ENCODE measurements at regions of chr20 and their contacts with region 1.

Region 1: DNA sequence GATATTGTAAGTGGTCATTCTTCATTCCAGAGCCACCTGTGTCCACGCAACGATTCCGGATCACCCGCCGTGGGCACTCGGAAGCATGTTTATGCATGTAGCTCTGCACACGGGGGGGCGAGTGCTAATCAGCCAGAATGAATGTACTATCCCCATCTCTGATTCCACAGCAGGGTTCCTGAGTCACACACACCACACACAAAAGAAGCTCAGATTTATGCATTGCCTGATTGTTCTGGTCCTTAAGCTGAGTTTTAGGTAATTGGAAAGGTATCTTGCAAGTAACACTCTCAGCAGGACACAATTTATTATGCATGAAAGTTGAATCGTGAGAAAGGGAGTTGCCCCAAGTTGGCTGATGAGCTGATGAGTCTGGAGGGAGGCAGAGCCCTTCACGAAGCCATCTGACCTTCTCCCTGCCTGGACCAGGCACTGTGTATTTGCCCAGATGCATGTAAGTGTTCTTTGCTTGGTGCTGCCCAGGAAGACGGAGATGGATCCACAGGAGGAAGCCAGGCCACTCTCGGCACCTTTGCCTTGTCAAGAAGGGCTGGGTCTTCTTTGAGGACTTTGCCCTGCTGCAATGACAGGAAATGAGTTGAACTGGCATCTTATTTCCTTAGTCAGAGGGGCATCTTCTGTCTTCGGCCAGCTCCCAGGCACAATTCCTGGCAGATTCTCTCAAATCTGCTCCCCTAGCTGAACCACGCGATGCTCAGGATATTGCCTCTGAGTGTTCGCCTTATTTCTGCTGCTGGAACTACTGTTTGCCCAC is 141.1 kb downstream of the SYNDIG1 start:
- DNase-seq: peak; percentile 95
- H3K4me3 ChIP-seq: no peak overlapping the region
- H3K27ac ChIP-seq: peak overlapping the region; percentile 91
- H3K4me1 ChIP-seq: peaks cover 56% of the 10 kb centered on the region
- H3K27me3 ChIP-seq: no peaks in the 10 kb centered on the region
- CTCF ChIP-seq: no peak

Region 2: GRCh38 chr20:24261351-24261750 is 349.2 kb before region 1 on chr20:
- CTCF ChIA-PET with region 1: no interaction called
- POLR2A ChIA-PET with region 1: no interaction called
- intact Hi-C with region 1: no loop called
- DNase-seq: no peak
- H3K4me3 ChIP-seq: no peak overlapping the region
- H3K27ac ChIP-seq: no peak overlapping the region
- H3K4me1 ChIP-seq: no peaks in the 10 kb centered on the region
- H3K27me3 ChIP-seq: no peaks in the 10 kb centered on the region
- CTCF ChIP-seq: no peak

Region 3: GRCh38 chr20:24651171-24651975 is 40.8 kb after region 1 on chr20:
- CTCF ChIA-PET with region 1: no interaction called
- POLR2A ChIA-PET with region 1: interaction called, 4 read pairs
- intact Hi-C with region 1: loop called (anchors 5 kb)
- DNase-seq: no peak
- H3K4me3 ChIP-seq: no peak overlapping the region
- H3K27ac ChIP-seq: peak overlapping the region; percentile 94
- H3K4me1 ChIP-seq: peaks cover 62% of the 10 kb centered on the region
- H3K27me3 ChIP-seq: no peaks in the 10 kb centered on the region
- CTCF ChIP-seq: no peak

Region 4: GRCh38 chr20:24755411-24755922 is 144.9 kb after region 1 on chr20:
- CTCF ChIA-PET with region 1: no interaction called
- POLR2A ChIA-PET with region 1: no interaction called
- intact Hi-C with region 1: loop called (anchors 5 kb)
- DNase-seq: peak; percentile 53
- H3K4me3 ChIP-seq: no peak overlapping the region
- H3K27ac ChIP-seq: peak overlapping the region; percentile 71
- H3K4me1 ChIP-seq: peaks cover 33% of the 10 kb centered on the region
- H3K27me3 ChIP-seq: no peaks in the 10 kb centered on the region
- CTCF ChIP-seq: no peak